Psoas muscle (tissue), 8 donors: ENCODE measurements at regions of chr18 and their contacts with region 1.

Region 1: DNA sequence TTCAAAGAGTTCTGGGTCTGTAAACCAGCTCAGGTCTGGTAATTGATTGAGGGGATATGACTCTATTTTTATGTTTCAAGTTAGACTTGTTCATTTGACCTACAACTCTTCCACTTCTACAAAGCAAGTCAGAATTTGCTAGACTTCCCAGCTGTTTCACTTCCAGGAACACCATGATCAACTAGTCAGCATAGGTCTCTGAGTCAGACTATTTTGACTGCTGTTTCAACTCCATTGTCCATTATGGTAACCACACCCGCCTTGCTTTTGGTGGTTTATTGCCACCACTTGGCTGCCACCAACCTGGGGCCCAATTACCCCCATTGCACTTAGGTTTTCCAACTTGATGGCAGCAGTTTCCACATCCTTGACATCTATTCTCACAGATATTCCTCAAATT is 116.6 kb downstream of the LAMA3 start:
- DNase-seq: no peak
- ATAC-seq: no peak
- H3K4me3 ChIP-seq: no peak overlapping the region
- H3K27ac ChIP-seq: no peak overlapping the region
- H3K4me1 ChIP-seq: no peaks in the 10 kb centered on the region
- H3K27me3 ChIP-seq: no peaks in the 10 kb centered on the region
- CTCF ChIP-seq: no peak

Region 2: DNA sequence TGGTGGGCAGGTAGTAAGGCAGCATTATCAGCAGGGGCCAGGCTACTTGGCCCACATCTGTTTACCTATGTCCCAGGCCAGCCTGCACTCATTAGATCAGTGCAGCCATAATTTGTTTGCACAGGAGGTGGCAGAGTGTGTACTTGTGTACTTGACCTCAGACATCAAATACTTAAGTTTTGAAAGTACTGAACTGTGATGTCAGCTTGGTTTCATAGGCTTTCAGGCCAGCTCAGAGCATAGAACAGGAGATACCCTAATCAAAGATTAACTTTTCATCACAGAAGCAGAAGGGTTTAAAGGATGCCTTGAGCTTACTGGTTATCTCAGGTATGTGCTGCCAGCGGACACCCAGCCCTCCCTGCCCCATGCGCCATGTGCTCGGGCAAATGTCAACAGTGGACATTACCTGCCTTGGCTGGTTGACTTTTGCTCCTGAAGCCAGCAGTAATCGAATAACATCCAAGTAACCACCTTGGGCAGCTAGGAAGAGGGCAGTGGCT is 176.4 kb before region 1 on chr18:
- intact Hi-C with region 1: loop called (anchors 5 to 10 kb)
- DNase-seq: no peak
- ATAC-seq: no peak
- H3K4me3 ChIP-seq: no peak overlapping the region
- H3K27ac ChIP-seq: no peak overlapping the region
- H3K4me1 ChIP-seq: peaks cover 21% of the 10 kb centered on the region
- H3K27me3 ChIP-seq: no peaks in the 10 kb centered on the region
- CTCF ChIP-seq: no peak

Region 3: DNA sequence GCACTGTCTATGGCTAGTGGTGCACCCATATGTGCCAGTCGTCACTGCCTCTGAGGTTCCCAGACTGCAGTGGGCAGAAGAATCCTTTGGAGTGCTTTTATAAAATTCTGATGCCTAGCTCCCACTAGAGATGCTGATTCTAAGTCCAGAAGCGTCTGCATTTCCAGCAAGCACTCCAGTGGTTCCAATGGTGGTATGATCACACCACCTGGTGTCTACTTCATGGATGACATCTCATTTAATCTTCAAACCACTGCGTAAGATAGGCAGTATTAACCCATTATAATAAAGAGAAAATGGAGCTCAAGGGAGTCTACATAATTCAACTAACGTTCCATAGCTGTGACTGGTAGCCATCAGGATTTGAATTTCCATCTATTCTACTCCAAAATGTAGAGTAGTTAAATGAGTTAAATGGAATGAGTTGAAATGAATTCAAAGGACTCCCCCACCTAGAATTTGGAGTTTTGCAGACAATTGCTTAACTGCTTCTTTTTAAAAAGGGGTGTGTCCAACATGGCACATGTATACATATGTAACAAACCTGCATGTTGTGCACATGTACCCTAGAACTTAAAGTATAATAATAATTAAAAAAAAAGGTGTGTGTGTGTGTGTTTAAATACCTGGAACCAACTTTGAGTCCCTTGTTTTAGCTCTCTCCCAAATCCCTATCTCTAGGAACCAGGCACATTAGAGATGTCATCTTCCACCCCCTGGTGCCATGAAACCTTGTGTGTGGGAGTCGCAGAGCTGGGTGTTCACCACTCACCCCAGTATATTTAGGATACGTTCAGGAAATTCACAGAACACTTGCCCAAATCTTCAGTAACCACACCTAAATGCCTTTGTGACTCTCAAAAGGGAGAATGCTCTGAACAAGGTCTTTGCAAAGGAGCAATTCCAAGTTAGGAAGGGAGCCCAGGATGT is 102.6 kb before region 1 on chr18:
- intact Hi-C with region 1: loop called in 1 of 2 experiments (anchors 10 kb)
- DNase-seq: no peak
- ATAC-seq: peak in 1 of 4 donors; percentile 54
- H3K4me3 ChIP-seq: no peak overlapping the region
- H3K27ac ChIP-seq: no peak overlapping the region
- H3K4me1 ChIP-seq: no peaks in the 10 kb centered on the region
- H3K27me3 ChIP-seq: peaks cover 0 to 5% (median 0%) of the 10 kb centered on the region in 3 donors
- CTCF ChIP-seq: peak; percentile 52

Region 4: GRCh38 chr18:23934252-23934651 is 128.4 kb after region 1 on chr18:
- intact Hi-C with region 1: loop called in 1 of 2 experiments (anchors 5 kb)
- DNase-seq: no peak
- ATAC-seq: no peak
- H3K4me3 ChIP-seq: no peak overlapping the region
- H3K27ac ChIP-seq: no peak overlapping the region
- H3K4me1 ChIP-seq: no peaks in the 10 kb centered on the region
- H3K27me3 ChIP-seq: no peaks in the 10 kb centered on the region
- CTCF ChIP-seq: no peak